ENCODE measurements at regions of chr19 and their contacts with region 1.

Region 1: DNA sequence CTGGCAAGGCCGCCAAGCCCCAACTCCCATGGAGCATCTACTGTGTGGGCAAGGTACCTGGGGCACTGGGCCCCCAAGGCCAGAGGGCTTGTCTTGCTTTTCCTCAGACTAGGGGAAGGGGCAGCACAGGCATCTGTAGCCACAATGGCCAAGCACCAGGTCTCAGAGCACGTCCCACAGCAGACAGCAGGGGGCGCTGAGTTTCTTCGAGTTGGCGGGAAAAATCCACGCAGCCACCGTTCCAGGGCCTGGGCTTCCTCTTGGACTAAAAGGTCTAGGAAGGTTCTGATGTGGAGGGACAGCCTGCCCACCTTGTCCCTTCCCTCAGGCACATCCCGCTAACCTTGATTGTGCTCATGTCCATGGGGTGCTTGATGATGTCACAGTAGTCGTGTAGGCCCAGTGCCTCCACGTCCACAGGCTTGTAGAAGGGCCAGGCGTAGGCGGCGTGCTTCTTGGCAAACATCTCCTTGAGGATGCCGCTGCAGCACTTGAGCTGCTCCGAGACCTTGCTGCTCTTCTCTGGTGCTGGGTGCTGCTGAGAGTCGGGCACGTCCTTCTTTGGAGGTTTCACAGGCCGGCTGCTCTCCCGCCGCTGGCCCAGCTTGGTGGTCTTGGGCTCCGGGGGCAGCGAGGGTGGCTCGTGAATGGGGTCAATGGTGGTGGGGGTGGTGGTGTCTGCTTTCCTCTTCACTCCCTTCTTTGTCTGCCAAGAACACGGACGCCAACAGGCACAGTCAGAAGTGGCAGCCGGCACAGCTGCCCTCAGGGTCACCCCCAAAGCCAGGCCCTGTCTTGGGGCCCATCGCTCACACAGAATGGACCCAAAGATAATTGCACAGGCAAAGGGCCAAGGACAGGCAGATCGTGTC is 32.0 kb upstream of the EPHX3 start:
- DNase-seq: no peak
- H3K4me3 ChIP-seq: no peak overlapping the region
- H3K27me3 ChIP-seq: no peaks in the 10 kb centered on the region
- CTCF ChIP-seq: peak; percentile 80

Region 2: DNA sequence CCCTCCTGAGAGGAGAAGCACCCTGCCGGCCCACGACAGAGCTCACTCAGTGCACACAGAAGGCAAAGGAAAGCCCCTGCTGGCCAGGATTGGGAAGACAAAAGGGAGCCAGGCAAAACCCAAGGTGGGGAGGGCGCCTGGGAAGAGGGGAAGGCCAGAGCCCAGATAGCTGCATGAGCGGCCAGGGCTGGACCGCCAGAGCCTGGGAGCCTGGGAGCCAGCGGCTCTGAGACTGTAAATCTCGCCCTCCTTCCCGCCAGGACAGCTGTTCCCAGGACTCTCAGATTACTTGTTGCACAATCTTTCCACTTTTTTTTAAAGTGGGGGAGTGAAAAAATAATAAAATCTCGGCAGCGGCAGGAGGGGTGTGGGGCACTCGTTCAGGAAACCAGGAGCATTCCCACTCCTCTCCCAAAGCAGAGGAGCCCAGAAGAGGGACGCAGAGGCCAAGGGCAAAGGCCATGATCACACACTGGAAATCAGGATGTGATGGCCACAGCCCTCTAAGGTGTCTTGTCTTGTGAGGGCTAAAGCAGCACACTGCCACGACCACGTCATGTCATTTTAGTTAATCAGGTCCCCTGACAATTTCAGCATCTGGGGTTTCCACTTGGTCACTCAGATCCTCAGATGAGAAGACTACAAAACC is 12.4 kb before region 1 on chr19:
- CTCF ChIA-PET with region 1: interaction called, 14 read pairs
- POLR2A ChIA-PET with region 1: no interaction called
- DNase-seq: peak; percentile 75
- H3K4me3 ChIP-seq: no peak overlapping the region
- H3K27me3 ChIP-seq: no peaks in the 10 kb centered on the region
- CTCF ChIP-seq: peak; percentile 60

Region 3: GRCh38 chr19:15365264-15365663 is 101.0 kb after region 1 on chr19:
- CTCF ChIA-PET with region 1: no interaction called
- POLR2A ChIA-PET with region 1: no interaction called
- DNase-seq: no peak
- H3K4me3 ChIP-seq: no peak overlapping the region
- H3K27me3 ChIP-seq: no peaks in the 10 kb centered on the region
- CTCF ChIP-seq: no peak